Mucosa of descending colon (tissue), 3 donors: ENCODE measurements at regions of chr14 and their contacts with region 1.

Region 1: DNA sequence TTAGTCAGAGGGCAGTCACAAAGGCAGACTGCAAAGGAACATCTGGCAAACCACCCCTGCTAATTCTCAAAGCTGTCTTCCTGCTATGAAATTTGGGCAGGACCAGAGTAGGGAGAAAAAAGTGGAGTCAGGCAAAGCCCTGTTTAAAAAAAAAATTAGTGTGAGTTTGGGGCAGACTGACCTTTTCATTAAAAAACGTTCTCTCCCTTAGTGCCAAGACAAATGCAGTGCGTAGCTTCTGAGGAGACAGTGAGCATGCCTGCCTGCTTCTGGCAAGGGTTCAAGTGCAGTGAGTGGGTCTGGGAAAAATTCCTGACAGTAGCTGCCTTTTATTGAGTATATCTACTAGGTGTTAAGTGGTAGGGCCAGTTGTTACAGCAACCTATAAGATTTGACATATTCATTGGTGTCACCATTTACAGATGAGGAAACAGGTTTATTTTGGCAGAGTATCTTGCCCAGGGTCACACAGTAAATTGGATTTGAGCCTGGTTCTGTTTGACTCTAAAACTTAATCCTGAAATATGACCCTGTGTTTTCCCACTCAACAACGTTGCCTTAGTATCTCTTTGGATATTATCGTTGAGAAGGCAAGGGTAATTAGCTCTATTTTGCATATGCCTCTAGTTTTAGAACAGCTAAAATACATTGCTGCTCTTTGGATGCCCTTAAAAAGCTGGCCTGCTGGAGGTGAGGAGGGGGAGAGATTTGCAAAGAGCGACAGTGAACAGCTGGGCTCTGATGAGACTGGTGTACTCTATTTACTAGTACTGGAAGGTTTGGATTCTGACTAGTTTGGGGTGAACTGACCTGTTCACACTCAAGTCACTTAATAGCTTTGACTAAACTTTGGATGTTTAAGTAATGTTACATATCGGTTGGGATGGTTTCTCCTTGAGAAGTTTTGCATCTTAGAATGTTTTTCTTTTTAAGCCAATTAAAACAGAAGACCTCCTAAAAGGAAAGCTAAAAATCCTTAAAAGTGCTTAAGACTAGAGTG is 72.8 kb downstream of the PAPOLA start:
- DNase-seq: no peak
- ATAC-seq: no peak
- H3K4me3 ChIP-seq: no peak overlapping the region
- H3K4me1 ChIP-seq: no peaks in the 10 kb centered on the region
- CTCF ChIP-seq: no peak

Region 2: DNA sequence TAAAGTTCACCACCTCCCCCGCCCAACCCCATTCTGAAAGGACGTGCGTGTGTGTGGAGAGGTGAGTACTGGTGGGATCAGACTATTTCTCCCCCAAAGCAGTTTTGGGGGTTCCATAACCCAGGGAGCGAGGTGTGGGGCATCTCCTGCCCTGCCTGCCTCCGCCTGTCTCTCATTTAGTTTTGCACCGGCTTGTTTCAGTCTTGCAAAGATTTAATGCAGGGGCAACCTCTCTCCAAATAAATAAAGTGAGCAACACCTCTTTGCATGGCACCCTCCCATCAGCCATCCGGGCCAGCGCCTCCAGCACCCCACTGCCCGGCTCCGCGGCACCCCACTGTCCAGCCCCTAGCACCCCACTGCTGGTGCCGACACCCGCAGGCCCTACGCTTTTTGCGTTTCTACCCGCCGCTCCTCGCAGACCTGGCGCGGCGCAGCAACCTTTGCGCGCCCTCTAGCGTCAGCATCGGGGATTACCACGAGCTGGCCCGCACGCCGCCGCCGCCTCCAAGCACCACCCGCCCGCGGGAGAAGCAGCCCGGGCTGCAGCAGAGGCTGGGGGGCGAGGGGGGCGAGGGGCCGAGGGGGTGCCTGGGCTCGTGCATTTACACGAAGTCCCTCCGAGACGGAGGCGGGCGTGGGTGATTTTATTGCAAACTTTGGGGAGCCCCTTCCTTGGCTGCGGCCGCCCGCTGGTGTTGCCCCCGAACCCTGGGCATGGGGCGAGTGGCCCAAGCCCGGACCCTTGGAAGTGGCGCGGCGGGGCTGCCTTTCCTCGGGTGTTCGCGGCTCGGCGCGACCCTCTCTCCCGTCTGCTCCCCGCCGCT is 166.4 kb after region 1 on chr14:
- intact Hi-C with region 1: loop called in 1 of 2 experiments (anchors 10 kb)
- DNase-seq: peak; percentile 61 to 76 (median 63)
- ATAC-seq: peak; percentile 95
- H3K4me3 ChIP-seq: no peak overlapping the region
- H3K4me1 ChIP-seq: no peaks in the 10 kb centered on the region
- CTCF ChIP-seq: peak; percentile 95